PC-9 (cell line): ENCODE measurements at regions of chr14 and their contacts with region 1.

Region 1: GRCh38 chr14:91536327-91536726 is 26.2 kb upstream of the PPP4R3A start:
- DNase-seq: no peak
- H3K4me3 ChIP-seq: no peak overlapping the region
- H3K27ac ChIP-seq: no peak overlapping the region
- H3K4me1 ChIP-seq: peaks cover 10% of the 10 kb centered on the region; the same call in 1 of the 2 replicates
- H3K27me3 ChIP-seq: no peaks in the 10 kb centered on the region
- CTCF ChIP-seq: no peak

Region 2: DNA sequence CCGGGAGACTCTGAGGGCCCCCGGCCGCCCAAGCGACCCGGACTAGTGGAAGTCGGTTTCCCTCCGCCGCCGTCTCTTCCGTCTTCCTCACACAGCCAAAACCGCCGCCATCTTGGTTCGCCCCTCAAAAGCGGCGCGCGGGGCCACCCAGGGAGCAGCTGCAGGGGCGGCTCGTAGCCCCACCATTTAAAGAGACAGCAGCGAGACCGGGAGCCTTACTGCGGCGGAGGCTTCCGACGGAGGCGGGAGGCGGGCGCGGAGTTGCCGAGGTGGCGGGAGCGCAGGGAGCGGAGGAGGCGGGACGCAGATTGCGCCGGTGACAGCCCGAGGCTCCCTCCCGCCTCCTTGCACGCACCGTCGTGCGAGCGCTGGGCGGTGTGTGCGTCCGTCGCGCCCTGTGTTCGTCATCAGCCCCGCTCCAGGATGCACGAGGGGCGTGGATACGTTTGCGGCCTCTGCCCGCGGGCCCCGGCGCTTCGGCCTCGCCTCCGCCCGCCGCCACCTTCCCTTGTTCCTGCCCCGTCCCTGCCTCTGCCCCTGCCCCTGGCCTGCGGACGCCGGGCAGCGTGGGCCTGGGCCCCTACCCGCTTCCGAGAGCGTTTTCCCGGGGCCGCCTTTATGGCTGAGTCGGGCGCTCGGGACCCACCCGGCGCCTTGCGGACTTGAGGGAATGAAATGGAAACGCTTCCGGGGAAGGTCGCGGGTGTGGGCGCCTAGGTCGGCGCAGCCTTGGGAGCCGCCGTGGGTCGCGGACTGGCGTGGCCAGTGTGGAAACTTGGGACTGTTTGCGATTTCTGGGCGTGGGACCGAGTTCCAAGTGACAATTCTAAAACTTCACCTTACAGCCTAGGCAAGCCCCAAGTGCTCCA is 25.9 kb before region 1 on chr14 and contains the start of gene PPP4R3A:
- CTCF ChIA-PET with region 1: no interaction called
- POLR2A ChIA-PET with region 1: no interaction called
- intact Hi-C with region 1: loop called (anchors 1 kb)
- DNase-seq: peak; percentile 78 to 80
- H3K4me3 ChIP-seq: peak within 1 kb of the TSS; percentile 92
- H3K27ac ChIP-seq: peak within 1 kb of the TSS; percentile 95
- H3K4me1 ChIP-seq: peaks cover 11% of the 10 kb centered on the region; the same call in 1 of the 2 replicates
- H3K27me3 ChIP-seq: no peaks in the 10 kb centered on the region
- CTCF ChIP-seq: no peak
- total RNA-seq, gene PPP4R3A: 14.8 and 15.5 TPM in 2 replicates